ENCODE measurements at regions of chr20 and their contacts with region 1.

Region 1: DNA sequence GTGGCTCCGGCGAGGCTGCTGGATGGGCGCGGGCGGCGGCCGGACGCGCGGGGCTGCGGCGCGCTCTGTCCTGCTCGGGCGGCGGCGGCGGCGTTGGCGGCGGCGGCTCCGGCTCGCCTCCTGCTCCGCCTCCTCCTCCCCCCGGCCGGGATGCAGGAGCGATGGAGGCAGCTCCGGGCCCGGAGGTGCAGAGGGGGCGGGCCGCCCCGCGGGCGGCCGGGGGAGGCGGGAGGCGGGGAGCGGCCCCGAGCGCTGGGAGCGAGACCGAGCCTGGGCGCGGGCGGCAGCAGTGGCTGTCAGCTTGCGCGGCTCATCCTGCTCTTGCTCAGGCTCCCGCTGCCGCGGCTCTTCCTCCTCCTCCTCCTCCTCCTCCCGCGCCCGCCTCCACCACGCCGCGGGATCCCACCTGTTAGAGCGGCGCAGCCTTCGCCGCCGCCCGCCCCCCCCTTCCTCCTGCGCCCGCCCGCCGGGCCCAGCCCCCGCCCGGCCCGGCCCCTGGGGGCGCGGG is at the start of gene NOL4L:
- DNase-seq: peak in 4 of 10 donors; percentile 32 to 69 (median 60)
- H3K4me3 ChIP-seq: peak within 1 kb of the TSS; percentile 54 to 89 (median 76)
- H3K27ac ChIP-seq: peak within 1 kb of the TSS in 57 of 59 donors; percentile 51 to 96 (median 86)
- H3K27me3 ChIP-seq: no peaks in the 10 kb centered on the region
- CTCF ChIP-seq: no peak
- total RNA-seq, gene NOL4L: 29.4 to 56.2 (median 42.8) TPM

Region 2: GRCh38 chr20:32535953-32536823 is 48.9 kb before region 1 on chr20:
- intact Hi-C with region 1: loop called (anchors 5 kb)
- DNase-seq: peak in 5 of 10 donors; percentile 50 to 84 (median 74)
- H3K4me3 ChIP-seq: peak overlapping the region; percentile 36 to 71 (median 60)
- H3K27ac ChIP-seq: peak overlapping the region; percentile 27 to 98 (median 91)
- H3K27me3 ChIP-seq: no peaks in the 10 kb centered on the region
- CTCF ChIP-seq: no peak

Region 3: GRCh38 chr20:32652739-32653526 is 67.9 kb after region 1 on chr20:
- intact Hi-C with region 1: loop called (anchors 2 to 10 kb)
- DNase-seq: peak; percentile 81 to 91 (median 88)
- H3K4me3 ChIP-seq: peak overlapping the region in 3 of 59 donors; percentile 9 to 21 (median 10)
- H3K27ac ChIP-seq: peak overlapping the region in 8 of 59 donors; percentile 14 to 60 (median 39)
- H3K27me3 ChIP-seq: no peaks in the 10 kb centered on the region
- CTCF ChIP-seq: peak in 55 of 56 donors; percentile 90 to 99 (median 97)

Measured in dorsolateral prefrontal cortex (tissue), 120 donors.